ENCODE measurements at regions of chr22 and their contacts with region 1.

Region 1: DNA sequence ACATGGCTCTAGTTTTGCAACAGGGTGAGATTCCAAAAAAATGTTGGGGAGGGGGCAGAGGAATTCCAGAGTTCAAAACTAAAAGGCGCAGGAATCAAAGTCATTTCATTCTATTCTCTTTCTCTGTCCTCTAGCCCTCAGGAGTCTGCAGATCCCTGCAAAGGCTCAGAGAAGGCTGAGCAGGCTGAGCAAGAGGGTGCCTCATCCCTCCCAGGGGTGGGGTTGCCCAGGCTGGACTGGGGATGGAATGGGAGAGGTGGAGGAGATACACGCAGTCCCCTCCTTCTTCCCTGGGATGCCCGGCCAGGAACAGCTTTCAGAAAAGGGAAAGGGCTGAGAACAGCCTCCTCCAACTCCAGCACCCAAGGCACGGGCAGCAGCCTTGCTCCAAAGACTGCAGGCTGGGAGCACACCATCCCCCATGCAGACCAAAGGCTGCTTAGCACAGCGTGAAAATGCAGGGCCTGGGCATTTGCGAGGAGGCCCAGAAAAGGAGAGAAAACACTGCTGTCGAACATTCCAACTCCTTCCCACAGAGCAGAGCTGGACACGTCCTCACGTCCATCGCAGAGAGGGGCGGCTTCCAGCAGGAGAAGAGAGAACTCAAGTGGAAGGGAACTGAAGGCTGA is 51.8 kb downstream of the MN1 start:
- DNase-seq: no peak
- H3K4me3 ChIP-seq: no peak overlapping the region
- H3K27ac ChIP-seq: peak overlapping the region; percentile 71
- H3K4me1 ChIP-seq: peaks cover 60% of the 10 kb centered on the region
- H3K27me3 ChIP-seq: no peaks in the 10 kb centered on the region
- CTCF ChIP-seq: no peak
- POLR2A ChIP-seq: no peak

Region 2: GRCh38 chr22:25930710-25931364 is 1818.9 kb before region 1 on chr22:
- intact Hi-C with region 1: no loop called
- DNase-seq: no peak
- H3K4me3 ChIP-seq: no peak overlapping the region
- H3K27ac ChIP-seq: no peak overlapping the region
- H3K4me1 ChIP-seq: no peaks in the 10 kb centered on the region
- H3K27me3 ChIP-seq: no peaks in the 10 kb centered on the region
- CTCF ChIP-seq: no peak
- POLR2A ChIP-seq: no peak

Region 3: GRCh38 chr22:27730654-27731433 is 18.9 kb before region 1 on chr22:
- intact Hi-C with region 1: no loop called
- DNase-seq: no peak
- H3K4me3 ChIP-seq: no peak overlapping the region
- H3K27ac ChIP-seq: no peak overlapping the region
- H3K4me1 ChIP-seq: peaks cover 20% of the 10 kb centered on the region
- H3K27me3 ChIP-seq: no peaks in the 10 kb centered on the region
- CTCF ChIP-seq: no peak
- POLR2A ChIP-seq: no peak

Region 4: DNA sequence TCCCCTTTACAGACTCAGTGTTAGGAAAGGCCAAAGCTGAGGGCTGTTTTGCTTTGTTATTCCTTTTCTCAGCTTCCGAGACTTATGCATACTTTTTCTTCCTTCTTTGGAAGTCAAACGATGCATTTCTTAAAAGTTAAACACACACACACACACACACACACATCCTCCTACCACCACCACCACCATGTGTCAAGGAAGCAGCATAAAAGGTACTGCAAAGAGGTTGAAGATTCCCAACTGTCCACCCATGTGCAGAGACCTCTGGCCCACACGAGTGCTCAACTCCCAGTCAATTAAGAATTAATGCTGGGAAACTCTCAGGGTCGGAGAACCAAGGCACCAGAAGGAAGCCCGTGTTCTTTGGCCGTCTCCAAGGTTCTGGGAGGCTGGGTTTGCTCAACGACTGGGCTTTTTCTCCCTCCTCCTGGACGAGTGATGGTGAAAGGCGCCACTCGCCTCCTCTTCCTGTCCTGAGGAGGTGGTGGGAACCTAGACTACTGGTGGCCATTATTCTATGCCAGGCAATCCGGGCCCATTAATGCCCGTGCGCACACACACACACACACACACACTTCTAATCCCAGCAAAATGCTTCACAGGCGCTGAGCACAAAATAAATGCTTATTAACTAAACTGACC is 36.7 kb after region 1 on chr22:
- intact Hi-C with region 1: loop called (anchors 5 kb)
- DNase-seq: no peak
- H3K4me3 ChIP-seq: no peak overlapping the region
- H3K27ac ChIP-seq: no peak overlapping the region
- H3K4me1 ChIP-seq: no peaks in the 10 kb centered on the region
- H3K27me3 ChIP-seq: no peaks in the 10 kb centered on the region
- CTCF ChIP-seq: no peak
- POLR2A ChIP-seq: no peak

Region 5: GRCh38 chr22:27799334-27800249 is 49.9 kb after region 1 on chr22:
- intact Hi-C with region 1: loop called (anchors 1 kb)
- DNase-seq: no peak
- H3K4me3 ChIP-seq: peak overlapping the region; percentile 55 to 72
- H3K27ac ChIP-seq: peak overlapping the region; percentile 86
- H3K4me1 ChIP-seq: peaks cover 61% of the 10 kb centered on the region
- H3K27me3 ChIP-seq: no peaks in the 10 kb centered on the region
- CTCF ChIP-seq: no peak
- POLR2A ChIP-seq: no peak

Measured in vagina (tissue), 2 donors.